Naive thymus-derived CD4-positive, alpha-beta T cell (primary cell): ENCODE measurements at regions of chr1 and their contacts with region 1.

Region 1: DNA sequence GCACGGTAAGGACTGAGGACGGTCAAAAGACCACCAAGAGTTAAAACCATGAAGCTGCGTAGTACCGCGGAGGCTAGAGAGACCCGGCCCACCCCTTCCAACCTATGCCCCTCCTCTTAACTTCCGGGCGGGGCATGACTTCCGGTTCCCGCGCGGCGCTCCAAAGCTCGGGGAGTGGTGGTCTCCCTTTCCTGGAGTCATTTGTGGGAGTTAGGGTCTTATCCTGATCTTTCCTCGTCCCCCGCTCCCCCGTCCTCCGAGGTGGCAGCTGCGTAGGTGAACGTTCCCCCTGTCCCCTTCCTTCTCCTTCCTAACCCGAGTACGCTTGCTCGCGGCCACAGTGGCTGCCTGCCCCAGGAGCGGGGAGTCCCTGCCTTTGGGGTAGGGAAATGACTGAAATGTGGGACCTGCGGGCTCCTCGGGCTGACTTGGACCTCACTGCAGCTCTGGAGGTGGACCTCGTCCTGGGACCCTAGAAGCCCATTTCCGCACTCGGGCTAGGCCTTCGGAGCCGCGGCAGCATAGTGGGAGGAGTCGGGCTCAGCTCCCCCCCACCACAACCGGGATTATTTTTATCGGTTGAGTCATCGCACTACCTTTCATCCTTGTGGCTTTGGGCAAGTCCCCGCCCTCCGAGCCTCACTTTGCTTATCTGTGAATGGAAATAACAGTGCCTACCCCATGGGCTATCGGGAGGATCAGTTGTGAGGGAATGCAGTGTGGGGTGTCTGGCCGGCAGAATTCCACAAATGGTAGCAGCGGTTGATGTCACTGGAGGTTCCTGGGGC is 24.1 kb downstream of the CELA3A start:
- DNase-seq: peak; percentile 68 to 94 (median 89)
- ATAC-seq: peak; percentile 83
- H3K4me3 ChIP-seq: peak overlapping the region; percentile 91
- H3K4me3 Mint-ChIP-seq: peak overlapping the region; percentile 89 to 97 (median 94)
- H3K27ac ChIP-seq: peak overlapping the region; percentile 99
- H3K27ac Mint-ChIP-seq: peak overlapping the region; percentile 95 to 100 (median 98)
- H3K4me1 ChIP-seq: peaks cover 23 to 28% of the 10 kb centered on the region in 2 donors
- H3K4me1 Mint-ChIP-seq: peaks cover 33 to 76% (median 59%) of the 10 kb centered on the region in 7 donors
- H3K27me3 ChIP-seq: no peaks in the 10 kb centered on the region
- H3K27me3 Mint-ChIP-seq: no peaks in the 10 kb centered on the region

Region 2: DNA sequence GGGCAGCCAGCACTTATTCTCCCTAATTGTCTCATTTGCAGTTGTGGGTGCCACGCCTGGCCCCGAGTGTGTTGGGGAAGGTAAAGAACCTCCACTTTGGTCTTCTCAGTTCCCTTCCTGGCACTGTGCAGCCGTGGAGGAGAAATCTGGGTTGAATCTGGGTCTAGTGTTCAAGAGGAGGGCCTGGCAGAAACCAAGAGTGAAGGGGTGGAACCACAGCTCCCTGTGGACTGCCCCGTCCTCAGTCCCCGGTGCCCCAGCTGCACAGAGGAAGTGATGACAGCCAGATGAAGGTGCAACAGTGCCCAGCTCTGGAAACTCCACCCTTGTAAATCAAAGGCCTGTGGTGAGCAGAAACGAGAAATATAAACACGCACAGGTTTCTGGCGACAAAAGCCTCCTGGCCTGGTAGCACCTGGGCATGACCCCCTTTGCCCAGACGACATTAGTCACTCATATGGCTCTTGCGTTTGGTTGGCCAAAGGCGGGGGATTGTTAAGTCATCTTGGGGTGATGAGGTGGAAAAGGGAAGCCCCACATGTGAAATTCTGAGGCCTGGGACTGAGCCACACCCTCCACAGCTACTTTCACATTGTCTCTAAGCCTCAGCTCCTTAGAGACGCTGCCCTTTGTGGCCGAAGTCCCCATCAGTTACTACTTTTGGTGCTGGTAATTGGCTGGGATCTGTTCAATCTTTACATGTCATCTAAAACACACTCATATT is 731.1 kb before region 1 on chr1:
- CTCF ChIA-PET with region 1: no interaction called
- POLR2A ChIA-PET with region 1: no interaction called
- intact Hi-C with region 1: loop called in 1 of 2 experiments (anchors 10 kb)
- DNase-seq: peak; percentile 57 to 95 (median 91)
- ATAC-seq: peak; percentile 87
- H3K4me3 ChIP-seq: peak overlapping the region; percentile 69
- H3K4me3 Mint-ChIP-seq: peak overlapping the region; percentile 81 to 97 (median 93)
- H3K27ac ChIP-seq: peak overlapping the region; percentile 94
- H3K27ac Mint-ChIP-seq: peak overlapping the region; percentile 91 to 100 (median 98)
- H3K4me1 ChIP-seq: peaks cover 60 to 62% of the 10 kb centered on the region in 2 donors
- H3K4me1 Mint-ChIP-seq: peaks cover 50 to 91% (median 84%) of the 10 kb centered on the region in 7 donors
- H3K27me3 ChIP-seq: no peaks in the 10 kb centered on the region
- H3K27me3 Mint-ChIP-seq: no peaks in the 10 kb centered on the region

Region 3: DNA sequence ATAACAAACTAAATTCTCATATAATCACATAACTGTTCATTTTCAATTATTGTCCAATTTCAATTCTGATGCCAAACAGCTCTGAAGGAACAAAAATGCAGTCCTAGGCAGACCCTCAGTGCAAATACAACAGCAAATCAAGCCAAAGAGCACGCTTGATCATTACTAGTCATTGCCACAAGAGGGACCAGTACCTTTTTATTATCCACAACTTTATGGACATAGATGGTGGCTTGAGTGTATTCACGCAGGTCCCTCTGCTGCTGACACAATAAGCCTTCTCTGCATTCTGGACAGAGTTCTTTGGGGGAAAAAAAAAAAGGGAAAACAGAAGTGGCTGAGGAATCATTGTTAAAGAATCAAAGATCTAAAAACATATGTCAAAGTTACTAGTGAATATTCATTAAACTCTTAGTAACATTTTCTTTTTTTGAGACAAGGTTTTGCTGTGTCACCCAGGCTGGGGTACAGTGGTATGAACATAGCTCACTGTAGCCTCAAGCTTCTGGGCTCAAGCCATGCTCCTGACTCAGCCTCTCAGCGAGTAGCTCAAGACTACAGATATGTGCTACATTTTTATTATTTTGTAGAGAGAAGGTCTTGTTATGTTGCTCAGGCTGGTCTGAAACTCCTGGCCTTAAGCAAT is 322.1 kb before region 1 on chr1:
- CTCF ChIA-PET with region 1: no interaction called
- POLR2A ChIA-PET with region 1: no interaction called
- intact Hi-C with region 1: loop called in 1 of 2 experiments (anchors 2 kb)
- DNase-seq: peak in 2 of 9 donors; percentile 5 to 8
- ATAC-seq: peak; percentile 44
- H3K4me3 ChIP-seq: no peak overlapping the region
- H3K4me3 Mint-ChIP-seq: no peak overlapping the region
- H3K27ac ChIP-seq: no peak overlapping the region
- H3K27ac Mint-ChIP-seq: peak overlapping the region in 1 of 9 donors; percentile 4
- H3K4me1 ChIP-seq: no peaks in the 10 kb centered on the region
- H3K4me1 Mint-ChIP-seq: peaks cover 0 to 24% (median 0%) of the 10 kb centered on the region in 7 donors
- H3K27me3 ChIP-seq: no peaks in the 10 kb centered on the region
- H3K27me3 Mint-ChIP-seq: no peaks in the 10 kb centered on the region

Region 4: DNA sequence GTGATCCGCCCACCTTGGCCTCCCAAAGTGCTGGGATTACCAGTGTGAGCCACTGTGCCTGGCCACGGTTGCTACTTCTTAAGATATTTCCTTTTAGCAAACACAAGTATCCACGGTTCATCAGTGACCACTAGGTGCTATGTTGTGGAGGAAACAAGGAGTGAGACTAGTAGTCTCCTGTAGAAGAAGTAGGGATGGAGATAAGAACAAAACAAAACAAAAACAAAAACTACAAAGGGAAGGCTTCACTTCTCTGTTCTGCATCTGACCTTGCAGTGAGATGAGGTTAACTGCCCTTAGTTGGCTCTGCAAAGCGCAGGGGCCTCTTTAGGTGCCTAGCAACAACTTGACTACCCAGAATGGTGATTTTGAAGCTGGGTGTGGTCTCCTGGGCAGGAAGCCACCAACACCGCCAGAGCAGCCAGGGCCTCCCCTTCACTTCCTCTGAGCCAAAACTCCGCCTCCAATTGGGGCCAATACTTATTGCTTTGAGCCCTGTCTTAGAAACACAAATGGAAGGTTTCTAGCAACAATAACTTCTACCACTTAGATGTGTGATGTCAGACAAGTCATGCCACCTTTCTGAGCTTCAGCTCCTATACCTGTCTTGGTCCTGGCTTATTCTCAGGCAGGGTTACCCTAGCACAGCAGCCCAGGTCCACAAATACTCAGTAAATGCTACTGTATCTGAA is 14.2 kb after region 1 on chr1:
- CTCF ChIA-PET with region 1: interaction called, 37 read pairs
- POLR2A ChIA-PET with region 1: interaction called, 312 read pairs
- intact Hi-C with region 1: loop called (anchors 1 kb)
- DNase-seq: peak; percentile 62 to 98 (median 97)
- ATAC-seq: peak; percentile 98
- H3K4me3 ChIP-seq: peak overlapping the region; percentile 25
- H3K4me3 Mint-ChIP-seq: peak overlapping the region; percentile 66 to 90 (median 81)
- H3K27ac ChIP-seq: peak overlapping the region; percentile 95
- H3K27ac Mint-ChIP-seq: peak overlapping the region; percentile 95 to 100 (median 99)
- H3K4me1 ChIP-seq: peaks cover 31 to 65% of the 10 kb centered on the region in 2 donors
- H3K4me1 Mint-ChIP-seq: peaks cover 35 to 77% (median 53%) of the 10 kb centered on the region in 7 donors
- H3K27me3 ChIP-seq: no peaks in the 10 kb centered on the region
- H3K27me3 Mint-ChIP-seq: no peaks in the 10 kb centered on the region

Region 5: GRCh38 chr1:22089787-22090186 is 64.2 kb after region 1 on chr1:
- CTCF ChIA-PET with region 1: interaction called, 11 read pairs
- POLR2A ChIA-PET with region 1: interaction called, 11 read pairs
- intact Hi-C with region 1: loop called in 1 of 2 experiments (anchors 2 kb)
- DNase-seq: peak in 5 of 9 donors; percentile 12 to 19 (median 16)
- ATAC-seq: peak; percentile 35
- H3K4me3 ChIP-seq: peak overlapping the region; percentile 16
- H3K4me3 Mint-ChIP-seq: peak overlapping the region; percentile 76 to 87 (median 78)
- H3K27ac ChIP-seq: peak overlapping the region; percentile 63
- H3K27ac Mint-ChIP-seq: peak overlapping the region; percentile 68 to 93 (median 78)
- H3K4me1 ChIP-seq: peaks cover 48 to 57% of the 10 kb centered on the region in 2 donors
- H3K4me1 Mint-ChIP-seq: peaks cover 69 to 97% (median 93%) of the 10 kb centered on the region in 7 donors
- H3K27me3 ChIP-seq: no peaks in the 10 kb centered on the region
- H3K27me3 Mint-ChIP-seq: no peaks in the 10 kb centered on the region

Region 6: DNA sequence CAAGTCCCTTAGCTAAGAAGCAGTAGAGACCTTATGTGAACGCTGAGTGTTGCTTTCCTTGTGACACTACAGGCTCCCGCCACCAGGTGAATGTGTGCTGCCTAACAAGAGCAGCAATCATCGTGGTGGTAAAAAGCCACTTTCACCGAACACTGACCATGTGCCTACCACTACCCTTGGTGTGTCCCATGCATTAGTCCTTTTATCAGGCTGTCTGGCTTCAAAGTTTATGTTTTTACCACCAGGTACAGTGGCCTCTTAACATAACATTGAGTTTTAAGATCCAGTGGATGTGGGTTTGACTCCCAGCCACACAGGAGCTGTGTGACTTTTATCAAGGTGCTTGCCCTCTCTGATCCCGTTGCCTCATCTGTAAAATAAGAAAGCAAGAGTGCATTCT is 629.1 kb after region 1 on chr1:
- CTCF ChIA-PET with region 1: no interaction called
- POLR2A ChIA-PET with region 1: no interaction called
- intact Hi-C with region 1: no loop called
- DNase-seq: no peak
- ATAC-seq: no peak
- H3K4me3 ChIP-seq: no peak overlapping the region
- H3K4me3 Mint-ChIP-seq: no peak overlapping the region
- H3K27ac ChIP-seq: no peak overlapping the region
- H3K27ac Mint-ChIP-seq: no peak overlapping the region
- H3K4me1 ChIP-seq: no peaks in the 10 kb centered on the region
- H3K4me1 Mint-ChIP-seq: no peaks in the 10 kb centered on the region
- H3K27me3 ChIP-seq: no peaks in the 10 kb centered on the region
- H3K27me3 Mint-ChIP-seq: peaks cover 0 to 30% (median 17%) of the 10 kb centered on the region in 5 donors